ENCODE measurements at regions of chr10 and their contacts with region 1.

Region 1: DNA sequence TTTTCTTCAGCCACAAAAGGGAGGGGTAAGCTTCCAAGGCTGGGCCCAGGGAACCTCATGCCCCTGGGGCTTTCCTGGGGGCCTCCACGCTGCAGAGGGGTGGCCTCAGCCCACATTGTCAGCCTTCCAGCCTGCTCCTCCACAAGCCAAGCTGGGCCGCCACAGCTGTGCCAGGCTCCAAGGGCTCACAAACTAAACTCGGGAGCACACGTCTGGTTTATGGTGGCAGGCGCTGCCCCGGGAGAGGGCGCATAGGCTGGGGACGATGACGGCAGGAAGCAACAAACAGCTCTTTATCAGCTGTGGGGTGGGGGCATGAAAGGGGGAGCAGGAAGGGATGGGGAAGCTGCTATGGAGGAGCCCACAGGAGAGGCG is 6.3 kb upstream of the CDH23 start:
- DNase-seq: no peak
- ATAC-seq: peak; percentile 25 to 34
- H3K4me3 ChIP-seq: no peak overlapping the region
- H3K27ac ChIP-seq: no peak overlapping the region
- H3K4me1 ChIP-seq: no peaks in the 10 kb centered on the region
- H3K27me3 ChIP-seq: no peaks in the 10 kb centered on the region

Region 2: GRCh38 chr10:71212318-71213126 is 177.9 kb before region 1 on chr10 and contains the start of gene UNC5B:
- intact Hi-C with region 1: no loop called
- DNase-seq: peak; percentile 93 to 98 (median 97)
- ATAC-seq: peak; percentile 89 to 92
- H3K4me3 ChIP-seq: peak within 1 kb of the TSS; percentile 51
- H3K27ac ChIP-seq: peak within 1 kb of the TSS; percentile 80
- H3K4me1 ChIP-seq: peaks cover 16% of the 10 kb centered on the region
- H3K27me3 ChIP-seq: no peaks in the 10 kb centered on the region
- total RNA-seq, gene UNC5B: 17.0 to 26.6 (median 24.0) TPM

Region 3: GRCh38 chr10:71708301-71708703 is 317.9 kb after region 1 on chr10:
- intact Hi-C with region 1: loop called (anchors 5 to 10 kb)
- DNase-seq: peak; percentile 65 to 88 (median 88)
- ATAC-seq: peak; percentile 7 to 37
- H3K4me3 ChIP-seq: no peak overlapping the region
- H3K27ac ChIP-seq: no peak overlapping the region
- H3K4me1 ChIP-seq: peaks cover 5% of the 10 kb centered on the region
- H3K27me3 ChIP-seq: no peaks in the 10 kb centered on the region

Measured in right cardiac atrium (tissue), 5 donors.